ENCODE measurements at regions of chr14 and their contacts with region 1.

Region 1: DNA sequence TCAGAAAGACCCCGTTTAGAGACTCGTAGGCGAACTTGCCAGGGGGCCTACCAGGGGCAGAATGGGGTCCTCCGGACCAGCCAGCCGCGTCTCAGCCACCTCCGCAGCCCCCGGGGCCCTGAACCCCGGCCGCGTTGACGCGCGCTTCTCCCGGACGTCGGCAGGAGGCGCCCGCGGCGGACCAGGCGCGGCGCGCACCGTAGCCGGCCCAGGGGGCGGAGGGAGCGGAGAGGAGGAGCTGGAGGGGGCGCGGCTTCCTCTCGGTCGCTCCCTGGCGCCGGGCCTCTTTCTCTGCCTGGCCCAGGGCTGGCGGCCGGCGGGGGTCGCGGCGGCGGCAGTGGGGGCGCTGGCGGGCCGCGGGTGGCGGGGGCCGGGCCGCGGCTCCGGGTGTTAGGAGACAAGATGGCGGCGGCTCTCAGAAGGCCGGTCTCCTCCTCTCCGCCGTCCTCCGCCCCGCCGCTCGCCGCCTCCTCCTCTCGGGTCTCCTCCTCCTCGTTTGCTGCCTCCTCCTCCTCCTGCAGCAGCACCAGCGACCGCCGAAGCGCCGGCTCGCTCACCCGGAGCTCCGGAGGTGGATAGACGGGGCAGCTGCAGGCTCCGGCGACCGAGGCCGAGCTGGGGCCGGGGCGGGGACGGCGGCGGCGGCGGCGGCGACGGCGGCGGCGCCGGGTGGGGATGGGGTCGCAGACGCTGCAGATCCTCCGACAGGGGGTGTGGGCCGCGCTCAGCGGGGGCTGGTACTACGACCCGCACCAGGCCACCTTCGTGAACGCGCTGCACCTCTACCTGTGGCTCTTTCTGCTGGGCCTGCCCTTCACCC is at the start of gene PCNX1:
- DNase-seq: peak; percentile 93
- ATAC-seq: peak; percentile 82
- H3K4me3 Mint-ChIP-seq: peak within 1 kb of the TSS; percentile 92
- H3K27ac Mint-ChIP-seq: peak within 1 kb of the TSS; percentile 82
- H3K4me1 Mint-ChIP-seq: peaks cover 54% of the 10 kb centered on the region
- H3K27me3 Mint-ChIP-seq: no peaks in the 10 kb centered on the region
- total RNA-seq, gene PCNX1: 64.4 to 69.2 TPM

Region 2: GRCh38 chr14:70816525-70816924 is 90.9 kb before region 1 on chr14:
- CTCF ChIA-PET with region 1: interaction called, 43 read pairs
- DNase-seq: no peak
- ATAC-seq: no peak
- H3K4me3 Mint-ChIP-seq: no peak overlapping the region
- H3K27ac Mint-ChIP-seq: no peak overlapping the region
- H3K4me1 Mint-ChIP-seq: peaks cover 26% of the 10 kb centered on the region
- H3K27me3 Mint-ChIP-seq: peaks cover 8% of the 10 kb centered on the region

Region 3: DNA sequence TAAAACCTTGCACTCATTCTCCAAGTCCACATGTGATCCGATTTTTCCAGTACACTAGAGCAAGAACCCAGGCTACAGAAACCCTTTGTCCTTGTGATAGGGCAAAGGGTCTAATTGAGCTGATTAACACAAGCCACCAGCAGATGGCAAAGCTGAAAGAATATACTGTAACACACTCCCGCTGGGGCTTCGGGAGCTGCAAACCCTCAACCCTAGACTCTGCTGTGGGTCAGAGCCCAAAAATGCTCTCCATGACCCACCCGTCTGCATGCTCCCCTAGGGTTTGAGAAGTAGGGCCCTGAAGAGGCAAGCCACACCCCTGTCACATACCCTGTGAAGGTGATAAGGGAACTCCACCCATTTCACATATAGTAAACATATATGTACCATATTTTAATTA is 33.8 kb before region 1 on chr14:
- CTCF ChIA-PET with region 1: interaction called, 41 read pairs
- DNase-seq: peak; percentile 53
- ATAC-seq: no peak
- H3K4me3 Mint-ChIP-seq: no peak overlapping the region
- H3K27ac Mint-ChIP-seq: peak overlapping the region; percentile 58
- H3K4me1 Mint-ChIP-seq: peaks cover 26% of the 10 kb centered on the region
- H3K27me3 Mint-ChIP-seq: no peaks in the 10 kb centered on the region

Region 4: GRCh38 chr14:70919774-70920173 is 12.4 kb after region 1 on chr14:
- CTCF ChIA-PET with region 1: interaction called, 34 read pairs
- DNase-seq: no peak
- ATAC-seq: no peak
- H3K4me3 Mint-ChIP-seq: peak overlapping the region; percentile 30
- H3K27ac Mint-ChIP-seq: peak overlapping the region; percentile 83
- H3K4me1 Mint-ChIP-seq: peaks cover 78% of the 10 kb centered on the region
- H3K27me3 Mint-ChIP-seq: no peaks in the 10 kb centered on the region

Region 5: DNA sequence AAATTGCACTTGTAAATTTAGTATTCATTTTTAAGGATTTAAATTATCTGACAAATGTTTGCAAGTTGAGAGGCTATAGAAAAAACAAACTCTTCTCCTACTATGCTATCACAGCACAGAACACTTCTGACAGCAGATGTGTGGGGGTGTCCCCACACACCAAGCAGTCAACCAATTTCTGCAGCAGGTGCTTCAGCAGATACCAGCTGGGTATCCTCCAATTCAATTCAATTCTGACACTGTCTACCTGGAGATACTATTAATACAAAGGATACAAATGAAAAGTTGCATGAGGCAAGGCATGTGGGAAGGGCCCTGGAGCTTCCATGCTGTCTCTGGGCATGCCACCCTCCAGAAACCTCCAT is 34.9 kb after region 1 on chr14:
- CTCF ChIA-PET with region 1: interaction called, 18 read pairs
- DNase-seq: no peak
- ATAC-seq: no peak
- H3K4me3 Mint-ChIP-seq: no peak overlapping the region
- H3K27ac Mint-ChIP-seq: peak overlapping the region; percentile 37
- H3K4me1 Mint-ChIP-seq: peaks cover 54% of the 10 kb centered on the region
- H3K27me3 Mint-ChIP-seq: no peaks in the 10 kb centered on the region

Region 6: DNA sequence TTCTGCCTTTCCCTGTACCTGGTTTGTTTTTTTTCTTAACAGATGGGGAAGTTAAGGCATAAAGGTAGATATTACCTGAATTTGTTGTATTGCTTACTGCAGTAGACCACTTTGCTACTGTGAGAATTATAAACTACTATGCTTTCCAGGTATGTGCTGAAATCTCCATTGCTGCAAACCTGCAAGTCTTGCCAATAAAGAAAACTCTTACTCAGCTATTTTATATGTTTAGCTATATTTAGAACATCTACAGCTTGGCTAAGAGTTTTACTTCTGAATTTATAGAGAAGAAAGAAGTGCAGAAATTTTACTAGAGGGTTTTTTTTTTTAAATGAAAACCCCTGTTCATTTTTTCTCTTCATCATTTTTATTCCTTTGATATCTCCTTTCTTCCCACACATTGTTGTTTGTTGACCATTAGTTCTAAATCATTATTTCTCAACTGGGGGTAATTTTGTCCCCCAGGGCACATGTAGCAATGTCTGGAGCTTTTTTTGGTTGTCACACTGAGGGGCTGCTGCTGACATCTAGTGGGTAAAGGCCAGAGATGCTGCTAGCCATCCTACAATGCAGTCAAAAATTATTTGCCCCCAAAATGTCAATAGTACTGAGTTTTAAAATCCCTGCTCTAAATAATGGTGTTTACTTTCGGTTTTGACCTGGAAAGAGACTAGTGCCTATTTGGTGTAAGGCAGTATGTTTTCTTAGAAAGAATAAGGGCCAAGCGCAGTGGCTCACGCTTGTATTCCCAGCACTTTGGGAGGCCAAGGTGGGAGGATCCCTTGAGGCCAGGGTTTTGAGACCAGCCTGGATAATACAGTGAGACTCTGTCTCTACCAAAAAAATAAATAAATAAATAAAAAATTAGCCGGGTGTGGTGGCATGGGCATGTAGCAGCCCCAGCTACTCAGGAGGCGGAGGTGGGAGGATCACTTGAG is 48.4 kb after region 1 on chr14:
- CTCF ChIA-PET with region 1: interaction called, 91 read pairs
- DNase-seq: peak; percentile 64
- ATAC-seq: peak; percentile 92
- H3K4me3 Mint-ChIP-seq: no peak overlapping the region
- H3K27ac Mint-ChIP-seq: peak overlapping the region; percentile 17
- H3K4me1 Mint-ChIP-seq: peaks cover 27% of the 10 kb centered on the region
- H3K27me3 Mint-ChIP-seq: no peaks in the 10 kb centered on the region

Region 7: GRCh38 chr14:70999117-70999516 is 91.7 kb after region 1 on chr14:
- CTCF ChIA-PET with region 1: interaction called, 10 read pairs
- DNase-seq: no peak
- ATAC-seq: peak; percentile 80
- H3K4me3 Mint-ChIP-seq: peak overlapping the region; percentile 14
- H3K27ac Mint-ChIP-seq: peak overlapping the region; percentile 65
- H3K4me1 Mint-ChIP-seq: peaks cover 45% of the 10 kb centered on the region
- H3K27me3 Mint-ChIP-seq: no peaks in the 10 kb centered on the region